T-cell (primary cell): ENCODE measurements at regions of chr9 and their contacts with region 1.

Region 1: DNA sequence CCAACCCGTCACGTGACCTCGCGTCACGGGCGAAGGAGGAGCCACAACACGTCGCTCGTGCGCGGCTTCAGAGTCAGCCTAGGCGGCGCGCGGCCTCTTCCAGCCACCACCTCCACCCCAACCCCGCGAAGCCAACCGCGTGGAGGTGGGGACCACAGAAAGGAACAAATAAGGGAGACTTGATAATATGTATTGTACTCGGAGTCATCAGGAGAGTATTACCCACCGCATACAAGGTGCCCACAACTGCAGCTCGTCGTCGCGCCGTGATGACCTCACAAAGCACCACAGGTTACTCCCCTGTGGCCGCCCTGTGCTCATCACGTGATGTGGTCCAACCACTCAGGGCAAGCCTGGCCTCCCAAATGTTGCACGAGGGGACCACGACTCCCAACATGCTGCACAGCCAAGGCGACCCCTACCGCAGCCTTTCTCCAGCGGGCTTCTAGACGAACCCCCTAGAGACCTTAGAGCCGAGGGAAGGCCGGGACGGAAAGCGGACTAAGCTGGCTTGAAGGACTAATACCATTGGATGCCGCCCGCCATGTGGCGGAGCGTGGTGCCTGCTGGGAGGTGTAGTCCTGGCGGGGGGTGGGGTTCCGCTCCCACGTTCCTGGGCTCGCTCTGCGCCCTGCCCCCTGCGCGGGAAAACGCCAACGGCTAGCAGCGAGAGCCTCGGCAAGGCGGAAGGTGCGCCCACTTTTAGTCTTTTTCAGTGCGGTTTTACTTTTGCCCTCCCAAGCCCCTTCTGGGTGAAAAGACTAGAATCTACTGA is 423 bp upstream of the UBAP2 start:
- DNase-seq: peak; percentile 92 to 99 (median 96)
- ATAC-seq: peak; percentile 85 to 88 (median 87)
- H3K4me3 ChIP-seq: peak overlapping the region; percentile 90 to 92
- H3K4me3 Mint-ChIP-seq: peak overlapping the region; percentile 97 to 99 (median 97)
- H3K27ac ChIP-seq: peak overlapping the region; percentile 88
- H3K27ac Mint-ChIP-seq: peak overlapping the region; percentile 99 to 100
- H3K4me1 ChIP-seq: peaks cover 18 to 21% of the 10 kb centered on the region in 2 experiments
- H3K4me1 Mint-ChIP-seq: peaks cover 25 to 36% (median 34%) of the 10 kb centered on the region in 3 donors
- H3K27me3 ChIP-seq: no peaks in the 10 kb centered on the region
- H3K27me3 Mint-ChIP-seq: peaks cover 0 to 2% of the 10 kb centered on the region in 2 donors

Region 2: GRCh38 chr9:33820231-33820745 is 228.8 kb before region 1 on chr9:
- CTCF ChIA-PET with region 1: no interaction called
- POLR2A ChIA-PET with region 1: no interaction called
- DNase-seq: no peak
- ATAC-seq: no peak
- H3K4me3 ChIP-seq: no peak overlapping the region
- H3K4me3 Mint-ChIP-seq: peak overlapping the region; percentile 47 to 88 (median 84)
- H3K27ac ChIP-seq: no peak overlapping the region
- H3K27ac Mint-ChIP-seq: peak overlapping the region; percentile 60 to 62
- H3K4me1 ChIP-seq: peaks cover 11 to 19% of the 10 kb centered on the region in 2 experiments
- H3K4me1 Mint-ChIP-seq: peaks cover 40 to 47% (median 46%) of the 10 kb centered on the region in 3 donors
- H3K27me3 ChIP-seq: no peaks in the 10 kb centered on the region
- H3K27me3 Mint-ChIP-seq: no peaks in the 10 kb centered on the region

Region 3: GRCh38 chr9:33992632-33993031 is 56.5 kb before region 1 on chr9:
- CTCF ChIA-PET with region 1: interaction called in 1 of 2 experiments, 12 read pairs
- POLR2A ChIA-PET with region 1: no interaction called
- DNase-seq: no peak
- ATAC-seq: no peak
- H3K4me3 ChIP-seq: no peak overlapping the region
- H3K4me3 Mint-ChIP-seq: no peak overlapping the region
- H3K27ac ChIP-seq: no peak overlapping the region
- H3K27ac Mint-ChIP-seq: no peak overlapping the region
- H3K4me1 ChIP-seq: no peaks in the 10 kb centered on the region
- H3K4me1 Mint-ChIP-seq: peaks cover 0 to 11% (median 5%) of the 10 kb centered on the region in 3 donors
- H3K27me3 ChIP-seq: no peaks in the 10 kb centered on the region
- H3K27me3 Mint-ChIP-seq: no peaks in the 10 kb centered on the region

Region 4: GRCh38 chr9:34010979-34011378 is 38.1 kb before region 1 on chr9:
- CTCF ChIA-PET with region 1: interaction called in 1 of 2 experiments, 10 read pairs
- POLR2A ChIA-PET with region 1: interaction called in 1 of 2 experiments, 3 read pairs
- DNase-seq: peak in 4 of 35 experiments; percentile 16 to 47 (median 19)
- ATAC-seq: no peak
- H3K4me3 ChIP-seq: no peak overlapping the region
- H3K4me3 Mint-ChIP-seq: no peak overlapping the region
- H3K27ac ChIP-seq: no peak overlapping the region
- H3K27ac Mint-ChIP-seq: no peak overlapping the region
- H3K4me1 ChIP-seq: no peaks in the 10 kb centered on the region
- H3K4me1 Mint-ChIP-seq: no peaks in the 10 kb centered on the region
- H3K27me3 ChIP-seq: no peaks in the 10 kb centered on the region
- H3K27me3 Mint-ChIP-seq: no peaks in the 10 kb centered on the region

Region 5: DNA sequence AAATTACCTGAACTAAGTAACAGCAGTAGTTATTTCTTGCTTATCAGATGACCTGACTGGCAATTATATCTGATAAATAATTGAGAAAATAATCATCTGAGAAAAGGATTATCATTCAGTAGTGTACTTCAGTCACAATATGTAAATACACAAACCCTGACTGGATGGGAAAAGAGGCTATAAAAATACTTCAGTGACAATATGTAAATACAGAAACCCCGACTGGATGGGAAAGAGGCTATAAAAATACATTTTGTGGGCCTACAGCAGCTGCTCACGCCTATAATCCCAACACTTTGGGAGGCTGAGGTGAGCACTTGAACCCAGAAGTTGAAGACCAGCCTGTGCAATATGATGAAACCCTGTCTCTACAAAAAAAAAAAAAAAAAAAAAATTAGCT is 11.5 kb before region 1 on chr9:
- CTCF ChIA-PET with region 1: no interaction called
- POLR2A ChIA-PET with region 1: interaction called, 5 to 12 read pairs
- DNase-seq: no peak
- ATAC-seq: no peak
- H3K4me3 ChIP-seq: no peak overlapping the region
- H3K4me3 Mint-ChIP-seq: no peak overlapping the region
- H3K27ac ChIP-seq: no peak overlapping the region
- H3K27ac Mint-ChIP-seq: no peak overlapping the region
- H3K4me1 ChIP-seq: no peaks in the 10 kb centered on the region
- H3K4me1 Mint-ChIP-seq: peaks cover 19% of the 10 kb centered on the region in 3 donors
- H3K27me3 ChIP-seq: no peaks in the 10 kb centered on the region
- H3K27me3 Mint-ChIP-seq: no peaks in the 10 kb centered on the region